Esophagus squamous epithelium (tissue), 5 donors: ENCODE measurements at regions of chr12 and their contacts with region 1.

Region 1: DNA sequence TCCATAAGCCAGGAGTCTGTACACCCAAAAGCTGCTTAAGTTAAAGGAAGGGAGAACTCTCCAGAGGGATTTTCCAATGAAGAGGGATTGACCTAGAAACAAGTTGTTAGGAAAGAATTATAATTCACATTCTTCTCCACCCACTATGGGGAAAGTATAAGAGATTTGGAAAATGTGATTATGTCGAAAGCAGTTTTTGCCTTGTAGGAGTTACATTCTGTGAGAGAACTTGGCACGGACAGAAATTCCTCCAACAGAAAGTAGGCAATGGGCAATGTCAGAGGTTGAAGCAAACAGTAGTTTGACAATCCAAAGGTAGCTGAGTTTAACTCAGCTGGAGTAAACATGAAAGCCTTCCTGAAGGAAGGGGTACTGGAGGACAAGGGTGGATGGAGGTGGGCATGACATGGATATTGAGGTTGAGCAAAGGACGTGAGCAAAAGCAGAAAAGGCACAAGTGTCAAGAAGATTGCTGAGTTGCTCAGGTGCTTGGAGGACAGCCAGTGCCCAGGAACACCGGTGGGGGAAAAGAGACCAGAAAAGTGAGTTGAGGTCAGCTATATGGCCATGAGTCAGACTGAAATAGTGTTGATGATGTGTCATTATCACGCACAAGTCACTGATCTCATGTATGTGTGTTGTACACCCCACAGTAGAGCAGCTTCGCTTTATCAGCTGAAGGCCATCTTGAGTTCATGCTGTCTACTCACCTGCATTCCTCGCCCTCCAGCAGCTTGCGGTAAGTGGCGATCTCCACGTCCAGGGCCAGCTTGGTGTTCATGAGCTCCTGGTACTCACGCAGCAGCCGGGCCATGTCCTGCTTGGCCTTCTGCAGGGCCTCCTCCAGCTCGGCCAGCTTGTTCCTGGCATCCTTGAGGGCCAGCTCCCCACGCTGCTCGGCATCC is 4.0 kb downstream of the KRT5 start:
- DNase-seq: no peak
- H3K4me3 ChIP-seq: peak overlapping the region; percentile 51 to 66 (median 52)
- H3K27ac ChIP-seq: peak overlapping the region; percentile 85 to 94 (median 90)
- H3K4me1 ChIP-seq: peaks cover 0 to 49% (median 4%) of the 10 kb centered on the region in 3 donors
- H3K27me3 ChIP-seq: peaks cover 0 to 6% (median 0%) of the 10 kb centered on the region in 4 donors
- CTCF ChIP-seq: no peak
- POLR2A ChIP-seq: no peak

Region 2: DNA sequence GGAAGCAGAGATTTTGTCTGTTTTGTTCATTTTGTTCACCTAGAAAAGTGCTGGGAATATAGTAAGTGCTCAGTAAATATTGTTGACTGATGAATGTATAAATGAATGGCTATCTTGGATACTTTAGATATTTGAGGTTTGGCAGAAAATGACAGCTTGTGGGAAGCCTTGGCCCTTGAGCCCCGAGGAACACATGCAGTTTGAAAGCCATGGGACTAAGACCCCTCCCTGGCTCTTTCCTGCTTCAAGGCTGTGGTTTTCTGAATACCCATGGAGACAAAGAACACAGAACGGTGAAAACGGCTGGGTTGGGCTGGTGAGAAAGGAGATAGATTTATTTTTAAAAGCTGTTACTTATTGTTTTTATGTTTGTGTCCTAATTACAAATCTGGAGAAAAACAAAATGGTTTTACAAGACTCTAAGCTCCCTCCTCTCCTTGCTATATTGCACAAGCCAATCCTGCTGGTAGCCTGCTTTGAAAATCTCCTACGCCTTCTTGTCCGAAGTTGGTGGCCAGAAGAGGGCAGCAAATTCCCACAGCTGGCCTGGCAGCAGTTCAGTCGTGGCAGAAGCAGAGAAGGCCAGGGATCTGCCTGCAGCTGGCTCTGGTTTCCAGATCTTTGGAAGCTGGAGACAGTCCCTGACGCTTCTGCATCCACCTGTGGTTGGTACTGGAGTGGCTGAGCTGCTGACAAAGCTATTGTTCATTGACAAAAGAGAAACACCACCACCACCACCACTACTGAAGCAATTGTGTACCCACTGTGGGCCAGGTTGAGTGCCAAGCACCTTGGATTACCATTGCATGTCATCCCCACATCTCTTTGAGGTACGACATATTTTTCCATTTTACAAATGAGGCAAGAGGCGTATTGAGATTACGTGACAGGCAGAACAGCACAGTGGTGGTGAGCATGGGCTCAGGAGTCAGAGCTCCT is 143.7 kb before region 1 on chr12:
- intact Hi-C with region 1: loop called (anchors 10 kb)
- DNase-seq: no peak
- H3K4me3 ChIP-seq: no peak overlapping the region
- H3K27ac ChIP-seq: peak overlapping the region; percentile 5 to 86 (median 72)
- H3K4me1 ChIP-seq: peaks cover 6 to 27% (median 20%) of the 10 kb centered on the region in 3 donors
- H3K27me3 ChIP-seq: peaks cover 0 to 12% (median 0%) of the 10 kb centered on the region in 4 donors
- CTCF ChIP-seq: peak; percentile 45 to 92 (median 84)
- POLR2A ChIP-seq: no peak

Region 3: DNA sequence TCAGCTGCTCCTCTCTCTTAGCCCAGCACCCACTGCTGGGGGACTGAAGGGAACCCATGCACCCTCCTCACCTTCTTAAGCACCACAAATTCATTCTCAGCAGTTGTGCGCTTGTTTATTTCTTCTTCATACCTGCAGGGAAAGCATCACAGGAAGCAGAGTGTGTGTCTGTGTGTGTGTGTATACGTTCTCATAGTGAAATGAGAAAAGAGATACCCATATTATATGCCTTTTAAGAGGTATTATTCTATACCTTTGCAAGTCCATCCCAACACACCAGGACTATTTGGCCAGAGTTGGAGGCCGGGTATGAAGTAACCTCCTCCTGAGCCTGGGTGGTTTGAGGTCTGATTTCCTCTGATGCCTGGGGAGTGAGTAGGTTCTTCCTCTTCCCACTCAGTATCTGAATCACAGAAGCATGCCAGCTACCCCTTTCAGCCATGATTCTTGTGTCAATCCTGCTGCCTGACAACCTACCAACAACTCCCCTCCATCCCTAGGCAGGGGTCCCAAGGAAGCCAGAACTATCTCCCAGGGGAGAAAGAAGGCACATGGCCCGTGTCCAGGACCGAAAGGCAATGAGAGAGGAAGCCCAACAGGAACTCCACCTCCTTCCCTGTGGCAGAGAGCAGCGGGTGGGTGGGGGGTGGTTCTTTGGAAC is 99.2 kb after region 1 on chr12:
- intact Hi-C with region 1: no loop called
- DNase-seq: no peak
- H3K4me3 ChIP-seq: no peak overlapping the region
- H3K27ac ChIP-seq: no peak overlapping the region
- H3K4me1 ChIP-seq: peaks cover 0 to 8% (median 0%) of the 10 kb centered on the region in 3 donors
- H3K27me3 ChIP-seq: peaks cover 0 to 44% (median 0%) of the 10 kb centered on the region in 4 donors
- CTCF ChIP-seq: no peak
- POLR2A ChIP-seq: no peak

Region 4: GRCh38 chr12:52735816-52736632 is 219.8 kb after region 1 on chr12:
- intact Hi-C with region 1: no loop called
- DNase-seq: no peak
- H3K4me3 ChIP-seq: no peak overlapping the region
- H3K27ac ChIP-seq: no peak overlapping the region
- H3K4me1 ChIP-seq: no peaks in the 10 kb centered on the region
- H3K27me3 ChIP-seq: peaks cover 0 to 61% (median 0%) of the 10 kb centered on the region in 4 donors
- CTCF ChIP-seq: no peak
- POLR2A ChIP-seq: no peak